ENCODE measurements at regions of chr11 and their contacts with region 1.

Region 1: DNA sequence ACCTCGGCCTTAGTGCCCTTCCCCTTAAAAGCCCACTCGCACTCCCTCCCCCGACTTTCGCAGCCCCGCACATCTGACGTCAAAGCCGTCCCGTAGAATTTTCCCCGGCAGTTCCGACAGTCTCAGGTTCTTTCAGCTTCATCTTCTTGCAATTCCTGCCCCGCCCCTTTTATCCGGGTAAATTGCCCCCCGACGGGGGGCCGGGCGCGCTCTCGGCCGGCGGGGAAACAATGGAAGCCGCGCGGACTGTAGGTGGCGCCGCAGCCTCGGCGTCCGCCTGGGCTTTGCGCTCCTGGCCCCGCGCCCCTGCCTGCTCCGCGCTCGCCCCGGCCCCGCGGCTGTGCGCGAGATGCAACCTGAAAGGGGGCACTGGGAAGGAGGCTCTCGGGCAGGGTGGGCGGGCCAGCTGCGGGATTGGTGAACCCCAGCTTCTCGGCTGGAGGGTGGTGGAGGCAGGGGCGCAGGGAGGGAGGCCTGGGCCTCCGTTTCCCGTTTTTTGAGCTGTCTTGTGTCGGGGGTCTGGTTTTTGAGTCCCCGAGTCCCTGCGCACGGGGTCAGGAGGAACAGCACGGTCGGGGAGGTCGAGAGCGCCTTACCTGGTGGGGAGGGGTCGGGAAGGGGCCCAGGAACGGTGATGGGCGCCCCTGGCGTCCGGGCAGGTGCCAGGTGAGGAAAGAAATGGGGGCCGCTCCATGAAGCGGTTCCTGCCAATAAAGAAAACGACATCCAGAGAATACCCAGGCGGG is 859 bp upstream of the FGF19 start:
- DNase-seq: no peak
- H3K4me3 ChIP-seq: no peak overlapping the region
- H3K27ac ChIP-seq: no peak overlapping the region
- H3K4me1 ChIP-seq: peaks cover 8% of the 10 kb centered on the region
- H3K27me3 ChIP-seq: peaks cover 55 to 60% of the 10 kb centered on the region in 2 experiments
- CTCF ChIP-seq: peak; percentile 41 to 59
- POLR2A ChIP-seq: no peak

Region 2: DNA sequence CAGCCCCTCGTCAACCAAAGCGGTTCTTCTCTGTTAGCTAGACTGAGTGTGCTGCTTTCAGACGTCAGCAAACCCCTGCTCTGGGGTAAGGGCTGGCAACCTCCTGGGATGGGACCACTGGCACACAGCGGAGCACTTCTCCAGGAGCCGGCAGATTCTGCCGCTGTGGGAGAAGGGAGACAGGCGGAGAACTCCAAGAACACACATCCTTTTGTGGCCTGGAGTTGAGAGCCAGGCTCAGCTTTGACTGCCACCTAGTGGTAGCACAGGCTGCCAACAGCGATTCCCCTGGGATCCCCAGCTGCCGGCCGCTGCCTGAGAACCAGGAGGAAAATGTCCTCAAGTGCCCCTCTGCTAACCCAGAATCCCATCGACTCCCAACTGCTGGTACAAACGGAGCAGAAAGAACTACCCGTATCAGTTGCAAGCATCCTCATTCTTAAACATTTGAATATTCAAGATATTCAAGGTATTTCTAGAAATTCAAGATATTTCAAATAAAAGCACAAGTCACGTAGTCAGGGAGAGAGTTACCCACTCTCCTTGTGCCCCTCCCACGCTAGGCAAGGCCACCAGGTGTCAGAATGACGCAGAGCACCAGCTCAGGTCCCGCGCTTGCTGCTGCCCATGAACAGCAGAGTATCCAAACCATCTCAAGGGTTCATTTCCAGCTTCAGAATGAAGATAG is 34.4 kb before region 1 on chr11:
- CTCF ChIA-PET with region 1: no interaction called
- POLR2A ChIA-PET with region 1: no interaction called
- dilution Hi-C with region 1: no loop called
- intact Hi-C with region 1: no loop called
- DNase-seq: peak; percentile 83
- H3K4me3 ChIP-seq: no peak overlapping the region
- H3K27ac ChIP-seq: no peak overlapping the region
- H3K4me1 ChIP-seq: peaks cover 9% of the 10 kb centered on the region
- H3K27me3 ChIP-seq: no peaks in the 10 kb centered on the region
- CTCF ChIP-seq: peak; percentile 94 to 97
- POLR2A ChIP-seq: peak; percentile 45

Region 3: GRCh38 chr11:69726019-69726418 is 21.3 kb after region 1 on chr11:
- CTCF ChIA-PET with region 1: no interaction called
- POLR2A ChIA-PET with region 1: no interaction called
- dilution Hi-C with region 1: no loop called
- intact Hi-C with region 1: no loop called
- DNase-seq: no peak
- H3K4me3 ChIP-seq: no peak overlapping the region
- H3K27ac ChIP-seq: no peak overlapping the region
- H3K4me1 ChIP-seq: no peaks in the 10 kb centered on the region
- H3K27me3 ChIP-seq: peaks cover 18 to 26% of the 10 kb centered on the region in 2 experiments
- CTCF ChIP-seq: no peak
- POLR2A ChIP-seq: no peak

Region 4: GRCh38 chr11:69801519-69802335 is 97.0 kb after region 1 on chr11:
- CTCF ChIA-PET with region 1: interaction called, 14 read pairs
- POLR2A ChIA-PET with region 1: no interaction called
- dilution Hi-C with region 1: no loop called
- intact Hi-C with region 1: loop called (anchors 1 kb)
- DNase-seq: peak; percentile 35
- H3K4me3 ChIP-seq: no peak overlapping the region
- H3K27ac ChIP-seq: no peak overlapping the region
- H3K4me1 ChIP-seq: no peaks in the 10 kb centered on the region
- H3K27me3 ChIP-seq: no peaks in the 10 kb centered on the region
- CTCF ChIP-seq: peak; percentile 53 to 91
- POLR2A ChIP-seq: no peak

Region 5: DNA sequence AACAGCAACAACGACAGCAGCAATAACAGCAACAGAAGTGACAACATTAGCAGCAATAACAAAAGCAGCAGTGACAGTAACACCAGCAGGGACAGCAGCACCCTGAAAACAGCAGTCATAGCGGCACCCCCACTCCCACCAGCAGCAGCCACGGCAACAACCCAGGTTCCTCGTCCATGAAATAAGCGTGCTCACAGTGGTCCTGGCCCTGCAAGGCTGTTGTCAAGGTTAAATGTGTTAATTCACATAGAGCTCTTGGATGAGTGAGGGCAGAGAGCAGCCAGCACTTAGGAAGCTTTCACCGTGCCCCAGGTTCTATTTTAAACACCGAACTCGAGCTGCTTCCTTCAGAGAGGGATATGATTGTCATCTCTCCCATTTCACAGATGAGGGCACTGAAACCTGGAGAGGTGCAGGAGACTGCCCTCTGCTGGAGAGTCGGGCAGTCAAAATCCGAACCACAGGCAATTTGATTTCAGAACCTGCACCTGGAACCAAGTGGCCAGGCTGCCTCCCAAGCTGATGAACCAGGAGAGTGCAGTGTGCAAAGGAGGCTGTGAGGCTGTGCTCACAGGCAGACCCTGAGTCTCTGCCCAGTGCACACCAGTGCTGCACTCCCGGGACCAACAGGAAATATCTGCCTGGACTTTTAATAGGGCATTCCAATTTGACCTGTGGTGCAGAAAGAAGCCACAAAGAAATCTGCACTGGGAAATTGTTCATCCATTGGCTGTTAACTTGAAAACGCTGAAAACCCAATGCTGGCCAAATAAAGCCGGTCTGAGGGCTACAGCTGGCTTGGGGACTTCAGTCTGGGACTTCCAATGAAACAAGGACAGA is 137.4 kb after region 1 on chr11:
- CTCF ChIA-PET with region 1: no interaction called
- POLR2A ChIA-PET with region 1: no interaction called
- dilution Hi-C with region 1: no loop called
- intact Hi-C with region 1: loop called (anchors 5 kb)
- DNase-seq: no peak
- H3K4me3 ChIP-seq: no peak overlapping the region
- H3K27ac ChIP-seq: no peak overlapping the region
- H3K4me1 ChIP-seq: no peaks in the 10 kb centered on the region
- H3K27me3 ChIP-seq: no peaks in the 10 kb centered on the region
- CTCF ChIP-seq: peak; percentile 39 to 56
- POLR2A ChIP-seq: no peak

Region 6: DNA sequence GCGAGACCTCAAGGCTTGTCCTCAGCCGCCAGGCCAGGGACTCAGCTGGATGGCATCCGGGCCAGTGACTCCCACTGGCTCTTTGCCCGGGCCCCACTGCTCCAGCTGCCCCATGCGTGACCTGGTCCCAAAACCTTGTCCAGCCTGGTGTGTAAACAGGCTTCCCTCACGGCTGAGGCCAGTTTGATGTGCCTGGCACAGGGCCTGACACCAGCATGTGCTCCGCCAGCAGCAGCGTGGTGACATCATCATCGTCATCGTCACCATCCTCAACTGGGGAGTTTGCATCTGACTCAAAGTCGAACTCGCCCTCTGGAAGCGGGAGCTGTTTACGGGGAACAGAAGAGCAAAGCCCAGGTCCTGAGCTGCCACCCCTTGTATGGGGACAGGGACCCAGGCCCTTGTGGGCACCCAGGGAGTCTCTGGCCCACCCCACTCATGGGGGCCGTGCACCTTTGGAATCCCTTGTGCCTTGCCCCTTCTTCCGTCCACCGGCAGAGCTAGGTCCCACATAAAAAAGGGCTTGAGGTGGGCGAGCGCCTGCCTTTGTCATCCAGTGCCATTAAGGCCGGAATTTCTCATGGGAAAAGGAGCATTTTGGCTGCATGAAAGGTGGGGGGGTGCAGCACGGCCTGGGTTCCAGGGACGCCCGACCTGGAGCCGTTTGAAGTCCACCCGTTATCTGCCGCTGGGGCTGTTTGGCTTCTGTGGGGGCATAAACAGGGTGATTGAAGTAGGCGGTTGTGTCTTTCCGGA is 163.2 kb after region 1 on chr11:
- CTCF ChIA-PET with region 1: no interaction called
- POLR2A ChIA-PET with region 1: no interaction called
- dilution Hi-C with region 1: no loop called
- intact Hi-C with region 1: no loop called
- DNase-seq: no peak
- H3K4me3 ChIP-seq: no peak overlapping the region
- H3K27ac ChIP-seq: no peak overlapping the region
- H3K4me1 ChIP-seq: no peaks in the 10 kb centered on the region
- H3K27me3 ChIP-seq: peaks cover 14 to 23% of the 10 kb centered on the region in 2 experiments
- CTCF ChIP-seq: no peak
- POLR2A ChIP-seq: no peak